GM13977 (cell line): ENCODE measurements at regions of chr22 and their contacts with region 1.

Region 1: DNA sequence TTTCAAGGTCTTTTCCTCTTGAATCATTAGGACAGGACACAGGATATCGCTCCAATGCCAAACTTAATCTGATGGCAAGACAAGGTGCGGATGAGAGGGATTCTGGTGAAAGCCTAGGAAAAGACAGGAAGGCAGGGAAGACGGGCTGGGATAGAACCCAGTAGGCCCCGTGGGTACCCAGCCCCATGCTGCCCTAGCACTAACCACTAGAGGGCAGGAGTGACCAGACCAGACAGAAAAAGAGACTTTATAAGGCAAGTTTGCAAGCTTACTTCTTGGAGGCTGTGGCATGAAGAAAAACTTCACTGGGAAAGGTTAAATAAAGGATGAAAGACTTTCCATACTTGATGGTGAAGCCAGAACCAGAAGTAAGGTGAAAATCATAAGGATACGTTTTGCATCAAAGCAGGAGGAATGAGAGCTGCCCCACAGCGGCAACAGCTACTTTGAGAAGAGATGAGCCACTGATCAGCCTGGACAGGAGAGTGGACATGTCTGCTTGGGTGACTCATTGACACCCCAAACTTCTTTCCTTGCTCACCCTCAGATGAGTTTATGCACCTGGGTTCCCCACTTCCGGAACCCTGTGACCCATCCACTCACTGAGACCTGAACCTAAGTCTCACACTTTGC is 39.8 kb downstream of the SYN3 start:
- DNase-seq: peak; percentile 67
- CTCF ChIP-seq: peak; percentile 88

Region 2: DNA sequence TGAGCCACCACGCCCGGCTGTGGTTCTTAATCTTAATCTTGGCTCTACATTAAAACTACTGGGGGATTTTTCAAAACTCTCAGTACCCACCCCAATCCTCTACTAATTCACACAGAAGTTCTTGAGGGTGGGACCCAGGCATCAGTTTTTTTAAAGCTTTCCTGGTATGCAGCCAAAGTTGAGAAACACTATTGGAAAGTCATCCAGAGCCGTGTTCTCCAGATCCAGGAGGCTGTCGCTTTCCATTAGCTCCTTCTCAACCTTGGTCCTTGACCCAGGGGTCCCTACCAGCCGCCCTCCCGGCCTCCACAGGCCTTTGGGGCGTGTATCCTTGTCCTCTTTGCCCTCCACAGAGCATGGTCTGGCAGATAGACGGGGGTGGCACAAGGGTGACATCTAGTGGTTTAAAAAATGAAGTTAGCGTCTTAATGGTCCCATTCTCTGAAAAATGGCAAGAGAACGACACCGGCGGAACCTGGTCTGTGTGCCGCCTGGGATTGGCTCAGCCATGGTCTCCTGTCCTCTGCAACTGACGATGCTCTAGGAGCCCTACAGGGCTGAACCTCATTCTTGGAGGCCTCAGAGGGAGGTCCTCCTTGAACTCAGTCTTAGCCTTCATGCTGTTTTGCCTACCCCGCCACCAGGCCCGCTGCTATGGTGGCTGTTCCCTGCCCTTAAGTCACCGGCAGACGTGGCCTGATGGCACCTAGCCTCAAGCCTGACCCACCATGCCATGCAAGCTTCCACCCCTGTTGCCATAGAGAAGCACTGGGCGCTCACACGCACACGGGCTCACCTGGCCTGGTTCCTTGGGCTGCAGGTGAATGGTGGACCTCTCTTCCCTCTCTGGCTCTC is 191.8 kb after region 1 on chr22:
- in situ Hi-C with region 1: loop called (anchors 10 kb)
- DNase-seq: peak; percentile 75
- CTCF ChIP-seq: peak; percentile 59